ENCODE measurements at regions of chr20 and their contacts with region 1.

Region 1: DNA sequence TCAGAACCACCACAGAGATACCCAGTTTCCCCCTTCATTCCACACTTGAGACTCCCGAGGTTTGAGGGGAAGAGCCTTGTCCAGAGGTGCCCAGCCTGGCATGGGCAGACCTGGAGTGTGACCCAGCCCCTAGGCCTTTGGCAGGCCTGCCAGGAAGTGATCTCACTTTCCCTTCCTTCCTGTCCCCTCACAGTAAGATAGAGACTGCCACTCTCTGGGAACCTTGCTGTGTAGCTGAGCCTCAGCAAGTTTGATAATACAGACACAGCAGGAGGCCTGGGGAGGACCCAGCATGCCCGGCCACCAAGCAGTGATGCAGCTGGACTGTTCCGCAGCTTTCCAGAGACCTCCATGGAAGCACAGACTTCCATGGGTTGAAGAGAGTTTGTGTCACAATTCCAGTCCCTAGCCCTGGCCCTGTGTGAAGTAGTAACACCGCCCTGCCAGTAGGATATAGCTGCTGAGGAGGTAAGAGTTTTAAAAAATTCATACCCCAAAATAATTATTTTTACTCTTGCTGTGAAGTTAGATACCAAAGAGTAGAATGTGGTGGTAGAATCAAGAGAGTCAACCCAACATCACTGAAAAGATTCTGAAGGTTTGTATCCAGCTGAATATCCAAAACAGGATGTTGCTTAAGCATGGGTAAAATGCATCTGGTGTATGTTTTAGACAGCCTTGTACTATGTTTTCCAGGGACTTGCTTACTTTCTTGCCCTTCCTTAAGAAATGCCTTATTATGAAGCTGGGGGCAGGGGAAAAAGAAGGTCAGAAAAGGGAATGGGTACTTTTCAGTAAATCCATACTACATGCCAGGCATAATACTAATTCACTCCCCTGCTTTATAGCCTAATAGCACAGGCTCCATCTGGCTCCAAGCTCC is 16.3 kb downstream of the PKIG start:
- DNase-seq: peak in 2 of 3 donors; percentile 34 to 43
- H3K4me3 ChIP-seq: peak overlapping the region in 5 of 7 experiments; percentile 23 to 54 (median 35)
- H3K27ac ChIP-seq: peak overlapping the region; percentile 51 to 74
- H3K4me1 ChIP-seq: peaks cover 11 to 52% (median 34%) of the 10 kb centered on the region in 4 experiments
- H3K27me3 ChIP-seq: no peaks in the 10 kb centered on the region

Region 2: DNA sequence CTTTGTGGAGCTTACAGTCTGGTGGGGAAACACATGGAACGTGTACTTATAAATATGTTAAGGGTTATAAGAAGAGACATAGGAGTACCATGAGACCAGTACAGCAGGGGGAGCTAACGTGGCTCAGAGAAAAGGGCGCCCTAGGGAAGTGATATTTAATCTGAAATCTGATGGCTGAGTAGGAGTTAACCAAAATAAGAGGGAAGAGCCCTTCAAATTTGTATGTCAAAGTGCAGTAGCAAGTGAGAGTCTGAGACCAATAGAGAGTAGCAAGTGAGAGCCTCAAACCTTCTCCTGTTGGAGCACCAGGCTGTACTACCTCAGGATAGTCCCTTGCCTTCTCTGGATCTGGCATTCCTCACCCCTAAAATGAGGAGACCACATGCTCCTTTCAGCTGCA is 22.4 kb before region 1 on chr20:
- CTCF ChIA-PET with region 1: interaction called, 31 read pairs
- POLR2A ChIA-PET with region 1: no interaction called
- DNase-seq: peak; percentile 68 to 86 (median 82)
- H3K4me3 ChIP-seq: peak overlapping the region in 1 of 7 experiments; percentile 38
- H3K27ac ChIP-seq: no peak overlapping the region
- H3K4me1 ChIP-seq: peaks cover 9 to 56% (median 40%) of the 10 kb centered on the region in 4 experiments
- H3K27me3 ChIP-seq: no peaks in the 10 kb centered on the region

Region 3: DNA sequence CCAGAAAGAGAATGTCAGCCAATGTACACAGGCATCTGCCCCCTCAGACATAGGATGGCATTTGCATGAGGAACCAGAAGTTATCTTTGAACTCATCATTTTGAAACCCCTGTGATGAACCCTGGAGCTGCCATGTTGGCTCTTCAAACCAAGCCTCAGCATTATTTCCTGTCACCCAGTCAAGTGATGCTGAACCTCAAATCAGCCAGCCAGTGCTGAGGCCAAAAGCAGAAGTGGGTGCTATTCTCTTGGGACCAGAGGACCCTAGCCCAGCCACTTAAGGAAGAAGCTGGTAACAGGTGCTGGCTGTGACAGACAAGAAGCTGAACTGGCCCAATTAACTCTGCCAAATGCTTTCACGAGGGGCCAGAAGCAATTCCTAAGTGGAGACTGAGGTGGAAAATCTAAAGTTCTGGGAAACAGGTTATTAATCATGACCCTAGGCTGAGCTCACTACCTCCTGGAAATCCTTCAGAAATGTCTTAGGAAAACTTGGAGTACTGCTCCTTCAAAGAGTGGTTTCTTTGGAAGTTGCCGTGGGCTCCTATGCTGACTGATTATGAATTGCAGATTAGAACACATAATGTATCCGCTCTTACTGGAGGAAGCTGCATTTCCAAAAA is 12.3 kb before region 1 on chr20:
- CTCF ChIA-PET with region 1: interaction called, 14 read pairs
- POLR2A ChIA-PET with region 1: interaction called, 3 read pairs
- DNase-seq: peak; percentile 62 to 93 (median 89)
- H3K4me3 ChIP-seq: no peak overlapping the region
- H3K27ac ChIP-seq: peak overlapping the region in 1 of 2 experiments; percentile 25
- H3K4me1 ChIP-seq: peaks cover 15 to 33% (median 21%) of the 10 kb centered on the region in 4 experiments
- H3K27me3 ChIP-seq: no peaks in the 10 kb centered on the region

Measured in common myeloid progenitor, CD34-positive (primary cell).